CD8-positive, alpha-beta memory T cell (primary cell): ENCODE measurements at regions of chr22 and their contacts with region 1.

Region 1: DNA sequence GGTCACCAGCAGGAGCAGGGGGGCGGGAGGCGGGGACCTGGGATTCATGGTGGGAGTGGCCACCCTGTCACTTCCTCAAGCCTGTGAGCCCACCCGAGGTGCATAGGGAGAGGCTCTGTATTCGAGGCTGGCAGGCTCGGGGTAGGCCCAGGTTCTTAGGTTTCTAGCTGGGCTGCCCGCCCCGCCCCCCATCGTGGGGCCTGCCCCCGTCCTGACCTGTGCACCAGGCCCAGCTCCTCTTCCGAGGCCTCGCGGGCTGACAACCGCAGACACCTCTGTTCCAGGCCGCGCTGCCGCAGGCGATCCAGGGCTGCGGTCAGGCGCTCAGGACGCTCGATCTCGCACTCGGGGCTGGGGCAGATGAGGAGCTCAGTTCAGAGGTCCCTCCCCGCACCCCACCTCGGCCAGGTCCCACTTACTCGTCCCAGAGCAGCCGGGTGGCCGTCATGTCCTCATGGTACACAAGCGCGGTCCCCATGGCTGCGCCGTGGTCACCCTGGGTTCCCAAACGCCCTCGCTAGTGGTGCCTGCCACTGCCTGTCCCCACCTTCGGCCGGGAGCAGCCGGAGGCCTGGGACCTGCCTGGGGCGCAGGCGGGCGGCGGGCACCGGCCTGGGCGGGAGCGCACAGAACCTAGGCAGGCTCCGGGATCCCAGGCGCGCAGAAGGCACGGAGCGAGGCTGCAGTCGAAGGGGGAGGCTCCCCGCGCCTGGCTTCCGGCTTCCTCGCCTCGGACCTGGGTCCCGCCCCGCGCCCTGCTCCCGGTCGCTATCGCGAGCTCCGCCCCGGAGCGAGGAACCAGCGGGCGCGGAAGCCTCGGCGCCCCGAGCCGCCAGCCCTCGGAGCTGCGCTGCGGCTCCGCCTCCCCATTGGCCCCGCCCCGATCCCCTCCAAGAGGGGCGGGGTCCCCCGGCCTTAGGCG is at the start of gene HDAC10:
- DNase-seq: peak; percentile 68 to 84 (median 75)
- H3K4me3 ChIP-seq: peak within 1 kb of the TSS; percentile 83
- H3K4me3 Mint-ChIP-seq: peak within 1 kb of the TSS; percentile 73 to 86 (median 82)
- H3K27ac ChIP-seq: peak within 1 kb of the TSS; percentile 65
- H3K27ac Mint-ChIP-seq: peak within 1 kb of the TSS in 7 of 8 donors; percentile 43 to 85 (median 60)
- H3K4me1 ChIP-seq: peaks cover 32% of the 10 kb centered on the region
- H3K4me1 Mint-ChIP-seq: peaks cover 8 to 36% (median 9%) of the 10 kb centered on the region in 3 donors
- H3K27me3 ChIP-seq: no peaks in the 10 kb centered on the region
- H3K27me3 Mint-ChIP-seq: peaks cover 0 to 1% of the 10 kb centered on the region in 2 donors
- total RNA-seq, gene HDAC10: 42.5 to 44.7 TPM

Region 2: GRCh38 chr22:50001388-50002231 is 249.2 kb before region 1 on chr22:
- CTCF ChIA-PET with region 1: no interaction called
- POLR2A ChIA-PET with region 1: no interaction called
- DNase-seq: no peak
- H3K4me3 ChIP-seq: no peak overlapping the region
- H3K4me3 Mint-ChIP-seq: peak overlapping the region in 1 of 7 donors; percentile 6
- H3K27ac ChIP-seq: no peak overlapping the region
- H3K27ac Mint-ChIP-seq: no peak overlapping the region
- H3K4me1 ChIP-seq: no peaks in the 10 kb centered on the region
- H3K4me1 Mint-ChIP-seq: peaks cover 5 to 9% (median 7%) of the 10 kb centered on the region in 3 donors
- H3K27me3 ChIP-seq: no peaks in the 10 kb centered on the region
- H3K27me3 Mint-ChIP-seq: peaks cover 6 to 9% of the 10 kb centered on the region in 2 donors

Region 3: GRCh38 chr22:50218996-50219727 is 31.7 kb before region 1 on chr22:
- CTCF ChIA-PET with region 1: no interaction called
- POLR2A ChIA-PET with region 1: no interaction called
- DNase-seq: no peak
- H3K4me3 ChIP-seq: no peak overlapping the region
- H3K4me3 Mint-ChIP-seq: no peak overlapping the region
- H3K27ac ChIP-seq: no peak overlapping the region
- H3K27ac Mint-ChIP-seq: peak overlapping the region in 1 of 8 donors; percentile 71
- H3K4me1 ChIP-seq: no peaks in the 10 kb centered on the region
- H3K4me1 Mint-ChIP-seq: peaks cover 3 to 5% (median 5%) of the 10 kb centered on the region in 3 donors
- H3K27me3 ChIP-seq: no peaks in the 10 kb centered on the region
- H3K27me3 Mint-ChIP-seq: peaks cover 0 to 2% of the 10 kb centered on the region in 2 donors

Region 4: GRCh38 chr22:50271519-50271970 is 20.7 kb after region 1 on chr22:
- CTCF ChIA-PET with region 1: interaction called, 10 read pairs
- POLR2A ChIA-PET with region 1: no interaction called
- DNase-seq: peak; percentile 25 to 69 (median 38)
- H3K4me3 ChIP-seq: peak overlapping the region; percentile 59
- H3K4me3 Mint-ChIP-seq: no peak overlapping the region
- H3K27ac ChIP-seq: no peak overlapping the region
- H3K27ac Mint-ChIP-seq: no peak overlapping the region
- H3K4me1 ChIP-seq: peaks cover 18% of the 10 kb centered on the region
- H3K4me1 Mint-ChIP-seq: peaks cover 3 to 26% (median 6%) of the 10 kb centered on the region in 3 donors
- H3K27me3 ChIP-seq: no peaks in the 10 kb centered on the region
- H3K27me3 Mint-ChIP-seq: peaks cover 3 to 7% of the 10 kb centered on the region in 2 donors

Region 5: DNA sequence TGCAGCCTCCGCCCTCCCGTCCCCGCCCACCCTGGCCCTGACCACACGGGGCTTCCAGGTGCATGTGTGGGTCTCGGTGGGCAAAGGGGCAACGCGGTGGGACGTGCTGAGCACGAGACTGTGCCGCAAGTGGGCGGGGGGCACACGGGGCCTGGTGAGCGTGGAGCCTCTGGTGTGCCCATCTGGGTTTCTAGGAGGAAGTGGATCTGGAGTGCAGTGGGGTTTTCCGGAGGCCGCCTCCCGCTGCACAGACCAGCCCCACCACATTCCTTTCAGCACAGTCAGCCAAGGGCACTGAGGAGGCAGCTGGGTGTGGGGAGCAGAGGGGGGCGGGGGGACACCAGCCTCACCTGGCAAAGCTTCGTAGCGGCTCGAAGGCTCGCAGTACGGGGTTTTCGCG is 31.5 kb after region 1 on chr22:
- CTCF ChIA-PET with region 1: no interaction called
- POLR2A ChIA-PET with region 1: no interaction called
- DNase-seq: no peak
- H3K4me3 ChIP-seq: no peak overlapping the region
- H3K4me3 Mint-ChIP-seq: no peak overlapping the region
- H3K27ac ChIP-seq: no peak overlapping the region
- H3K27ac Mint-ChIP-seq: no peak overlapping the region
- H3K4me1 ChIP-seq: no peaks in the 10 kb centered on the region
- H3K4me1 Mint-ChIP-seq: no peaks in the 10 kb centered on the region
- H3K27me3 ChIP-seq: no peaks in the 10 kb centered on the region
- H3K27me3 Mint-ChIP-seq: no peaks in the 10 kb centered on the region

Region 6: DNA sequence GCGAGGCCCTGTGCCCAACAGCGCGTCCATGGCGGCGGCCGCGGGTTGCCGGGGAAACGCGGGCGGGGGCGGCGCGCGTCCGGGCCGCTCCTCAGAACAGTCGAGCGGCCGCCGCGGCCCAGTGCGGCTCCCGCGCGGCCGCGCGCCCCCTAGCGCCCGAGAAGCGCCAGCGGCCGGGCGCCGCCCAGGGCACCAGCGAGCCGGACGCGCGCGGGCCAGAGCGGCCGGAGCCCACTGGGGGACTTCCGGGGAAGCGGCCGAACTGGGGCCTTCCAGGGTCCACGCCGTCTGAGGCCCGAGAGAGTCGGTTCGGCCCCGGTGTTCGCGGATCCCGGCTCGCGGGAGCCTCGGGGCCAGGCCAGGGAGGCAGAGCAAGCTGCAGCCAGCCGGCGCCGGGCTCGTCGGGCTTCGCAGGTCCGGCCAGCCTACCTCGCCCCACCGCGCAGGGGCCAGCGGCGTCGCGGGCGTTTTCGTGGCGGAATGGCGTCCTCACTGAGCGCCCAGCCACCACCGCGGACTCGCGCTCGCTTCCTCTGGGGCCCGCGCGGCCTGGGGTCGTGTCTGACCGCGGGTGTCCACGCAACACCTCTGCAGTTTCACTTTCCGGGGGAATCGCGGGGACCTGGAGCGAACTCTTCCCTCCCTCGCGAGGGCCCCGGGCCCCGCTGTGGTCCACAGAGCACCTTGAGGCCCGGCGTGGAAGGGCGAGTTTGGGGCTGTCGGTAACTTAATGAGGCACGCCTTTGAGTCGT is 76.3 kb after region 1 on chr22 and contains the start of gene DENND6B:
- CTCF ChIA-PET with region 1: interaction called, 33 read pairs
- POLR2A ChIA-PET with region 1: interaction called, 7 read pairs
- DNase-seq: peak; percentile 58 to 73 (median 64)
- H3K4me3 ChIP-seq: peak within 1 kb of the TSS; percentile 53
- H3K4me3 Mint-ChIP-seq: peak within 1 kb of the TSS; percentile 78 to 91 (median 84)
- H3K27ac ChIP-seq: peak within 1 kb of the TSS; percentile 61
- H3K27ac Mint-ChIP-seq: peak within 1 kb of the TSS; percentile 37 to 95 (median 70)
- H3K4me1 ChIP-seq: peaks cover 7% of the 10 kb centered on the region
- H3K4me1 Mint-ChIP-seq: peaks cover 4 to 13% (median 13%) of the 10 kb centered on the region in 3 donors
- H3K27me3 ChIP-seq: no peaks in the 10 kb centered on the region
- H3K27me3 Mint-ChIP-seq: peaks cover 3 to 6% of the 10 kb centered on the region in 2 donors
- total RNA-seq, gene DENND6B: 3.9 to 4.3 TPM

Region 7: GRCh38 chr22:50341977-50342650 is 91.3 kb after region 1 on chr22:
- CTCF ChIA-PET with region 1: interaction called, 11 read pairs
- POLR2A ChIA-PET with region 1: interaction called, 4 read pairs
- DNase-seq: peak; percentile 81 to 91 (median 86)
- H3K4me3 ChIP-seq: peak overlapping the region; percentile 44
- H3K4me3 Mint-ChIP-seq: peak overlapping the region; percentile 85 to 96 (median 89)
- H3K27ac ChIP-seq: peak overlapping the region; percentile 56
- H3K27ac Mint-ChIP-seq: peak overlapping the region; percentile 88 to 96 (median 94)
- H3K4me1 ChIP-seq: peaks cover 17% of the 10 kb centered on the region
- H3K4me1 Mint-ChIP-seq: peaks cover 6 to 12% (median 11%) of the 10 kb centered on the region in 3 donors
- H3K27me3 ChIP-seq: no peaks in the 10 kb centered on the region
- H3K27me3 Mint-ChIP-seq: no peaks in the 10 kb centered on the region